Transverse colon (tissue), 4 donors: ENCODE measurements at regions of chr1 and their contacts with region 1.

Region 1: GRCh38 chr1:64966158-64966971 is at the start of gene JAK1:
- DNase-seq: peak; percentile 91
- H3K4me3 ChIP-seq: peak within 1 kb of the TSS; percentile 92 to 97 (median 95)
- H3K27ac ChIP-seq: peak within 1 kb of the TSS; percentile 97 to 98 (median 98)
- H3K4me1 ChIP-seq: peaks cover 15 to 46% (median 28%) of the 10 kb centered on the region in 4 donors
- H3K27me3 ChIP-seq: no peaks in the 10 kb centered on the region
- CTCF ChIP-seq: no peak
- EP300 ChIP-seq: no peak
- POLR2A ChIP-seq: peak; percentile 5
- total RNA-seq, gene JAK1: 52.9 to 169 (median 126) TPM

Region 2: DNA sequence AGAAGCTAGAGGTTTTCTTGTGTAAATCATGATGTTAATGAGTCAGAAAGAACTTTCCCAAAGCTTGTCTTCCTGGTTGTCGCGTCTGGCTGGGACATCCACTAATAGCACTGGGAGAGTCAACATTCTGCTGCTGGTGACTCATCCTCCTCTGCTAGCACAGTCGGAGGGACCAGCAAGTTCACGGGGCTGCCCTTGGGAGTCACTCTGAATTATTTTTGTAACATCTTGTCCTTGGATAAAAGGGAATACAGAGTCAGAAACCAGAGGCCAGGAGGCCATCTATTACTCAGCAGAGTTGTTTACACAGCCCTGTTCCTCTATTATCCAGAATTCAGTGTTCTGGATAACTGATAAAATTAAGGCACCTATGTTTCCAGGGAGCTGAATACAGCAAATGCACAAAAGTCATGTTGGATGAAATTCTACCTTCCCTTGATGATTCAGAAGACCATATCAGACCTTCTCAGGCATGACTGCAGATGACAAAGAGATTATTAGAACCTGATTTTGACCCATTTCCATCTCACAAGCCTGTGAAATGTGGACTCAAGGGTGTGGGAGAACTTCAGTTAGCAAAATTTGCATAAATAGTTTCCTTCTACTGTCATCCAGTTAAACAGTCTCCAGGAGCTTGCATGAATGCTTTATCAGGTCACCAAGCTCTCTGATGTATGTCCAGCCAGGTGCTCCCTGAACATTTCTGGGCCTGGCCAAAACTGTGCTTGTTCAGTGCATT is 68.1 kb before region 1 on chr1:
- in situ Hi-C with region 1: no loop called
- intact Hi-C with region 1: loop called (anchors 10 kb)
- DNase-seq: peak; percentile 82
- H3K4me3 ChIP-seq: no peak overlapping the region
- H3K27ac ChIP-seq: peak overlapping the region; percentile 78 to 87 (median 80)
- H3K4me1 ChIP-seq: peaks cover 22 to 56% (median 30%) of the 10 kb centered on the region in 4 donors
- H3K27me3 ChIP-seq: no peaks in the 10 kb centered on the region
- CTCF ChIP-seq: no peak
- EP300 ChIP-seq: peak; percentile 18
- POLR2A ChIP-seq: no peak

Region 3: DNA sequence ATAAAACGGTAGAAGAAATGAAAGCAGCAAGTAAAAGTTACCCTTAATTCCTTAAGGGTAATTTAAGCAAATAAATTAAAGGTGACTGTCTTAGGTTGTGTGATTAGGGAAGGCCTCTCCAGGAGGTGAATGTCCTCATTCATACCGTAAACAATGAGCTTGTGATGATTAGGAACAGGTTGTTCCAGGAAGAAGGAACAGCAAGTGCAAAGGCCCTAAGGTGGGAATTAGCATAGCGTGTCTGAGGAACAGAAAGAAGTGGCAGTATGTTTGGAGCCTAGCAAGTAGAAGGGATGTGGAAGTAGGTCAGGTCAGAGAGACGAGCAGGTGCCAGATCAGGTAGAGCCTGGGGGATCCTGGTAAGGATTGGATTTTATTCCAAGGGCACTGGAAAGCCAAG is 187.3 kb after region 1 on chr1:
- in situ Hi-C with region 1: no loop called
- intact Hi-C with region 1: loop called (anchors 2 kb)
- DNase-seq: no peak
- H3K4me3 ChIP-seq: no peak overlapping the region
- H3K27ac ChIP-seq: peak overlapping the region in 2 of 4 donors; percentile 29 to 34
- H3K4me1 ChIP-seq: peaks cover 0 to 37% (median 16%) of the 10 kb centered on the region in 4 donors
- H3K27me3 ChIP-seq: peaks cover 3% of the 10 kb centered on the region
- CTCF ChIP-seq: no peak
- EP300 ChIP-seq: no peak
- POLR2A ChIP-seq: no peak

Region 4: GRCh38 chr1:65195495-65196417 is 229.4 kb after region 1 on chr1:
- in situ Hi-C with region 1: no loop called
- intact Hi-C with region 1: no loop called
- DNase-seq: no peak
- H3K4me3 ChIP-seq: no peak overlapping the region
- H3K27ac ChIP-seq: no peak overlapping the region
- H3K4me1 ChIP-seq: no peaks in the 10 kb centered on the region
- H3K27me3 ChIP-seq: no peaks in the 10 kb centered on the region
- CTCF ChIP-seq: no peak
- EP300 ChIP-seq: no peak
- POLR2A ChIP-seq: no peak